ENCODE measurements at regions of chr6 and their contacts with region 1.

Region 1: DNA sequence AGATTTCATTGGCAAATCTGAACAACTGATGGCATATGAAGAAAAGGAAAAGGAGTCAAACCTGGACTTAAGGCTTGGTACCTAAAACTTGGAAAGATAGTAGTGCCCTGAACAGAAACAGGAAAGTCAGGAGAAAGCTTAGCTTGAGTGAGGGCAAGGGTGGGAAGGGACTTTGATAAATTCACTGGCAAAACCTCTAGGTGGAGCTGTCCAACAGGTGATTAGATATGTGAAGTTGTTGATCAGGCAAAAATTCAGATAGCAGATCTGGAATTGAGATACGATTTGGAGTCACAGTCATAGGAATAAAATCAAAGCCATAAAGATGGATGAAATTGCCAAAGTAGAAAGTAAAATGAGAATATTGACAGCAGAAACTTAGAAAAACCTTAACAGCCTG is 16.1 kb upstream of the ZNF292 start:
- DNase-seq: peak; percentile 53
- H3K4me3 Mint-ChIP-seq: no peak overlapping the region
- H3K27ac Mint-ChIP-seq: no peak overlapping the region
- H3K4me1 Mint-ChIP-seq: no peaks in the 10 kb centered on the region
- H3K27me3 Mint-ChIP-seq: peaks cover 42% of the 10 kb centered on the region
- CTCF ChIP-seq: peak; percentile 71

Region 2: GRCh38 chr6:87059943-87060342 is 79.3 kb before region 1 on chr6:
- CTCF ChIA-PET with region 1: no interaction called
- intact Hi-C with region 1: no loop called
- DNase-seq: no peak
- H3K4me3 Mint-ChIP-seq: no peak overlapping the region
- H3K27ac Mint-ChIP-seq: no peak overlapping the region
- H3K4me1 Mint-ChIP-seq: no peaks in the 10 kb centered on the region
- H3K27me3 Mint-ChIP-seq: peaks cover 39% of the 10 kb centered on the region
- CTCF ChIP-seq: no peak

Region 3: DNA sequence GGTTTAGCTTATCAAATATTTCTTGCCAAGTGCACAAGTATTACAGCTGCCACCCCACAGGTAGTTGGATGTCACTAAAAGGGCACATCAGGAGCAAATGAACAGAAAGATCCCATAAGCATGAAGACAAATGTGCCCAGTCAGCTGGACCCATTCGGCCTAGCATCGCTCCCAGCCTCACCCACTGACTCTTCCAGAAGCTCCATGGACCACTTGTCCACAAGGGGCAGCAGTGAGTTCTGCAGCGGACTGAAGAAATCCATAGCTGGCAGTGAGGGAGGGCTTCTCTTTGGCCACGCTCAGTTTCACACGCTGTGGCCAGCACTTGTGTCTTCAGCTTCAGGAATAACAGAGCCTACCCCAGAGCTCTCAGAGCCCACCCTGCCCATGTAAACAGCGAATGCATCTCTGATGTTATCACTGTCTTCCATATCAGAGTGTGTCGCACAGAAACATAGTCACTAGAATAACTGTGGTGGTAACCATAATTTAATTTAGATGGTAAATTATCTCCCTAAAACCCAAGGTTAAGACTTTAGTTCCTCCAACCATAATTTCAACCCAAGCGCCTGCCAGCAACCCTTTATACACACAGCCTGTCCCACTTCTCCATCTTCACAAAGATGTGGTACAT is 60.1 kb before region 1 on chr6:
- CTCF ChIA-PET with region 1: no interaction called
- intact Hi-C with region 1: loop called (anchors 10 kb)
- DNase-seq: peak; percentile 83
- H3K4me3 Mint-ChIP-seq: no peak overlapping the region
- H3K27ac Mint-ChIP-seq: no peak overlapping the region
- H3K4me1 Mint-ChIP-seq: peaks cover 11% of the 10 kb centered on the region
- H3K27me3 Mint-ChIP-seq: peaks cover 41% of the 10 kb centered on the region
- CTCF ChIP-seq: peak; percentile 87

Region 4: GRCh38 chr6:87089135-87089534 is 50.1 kb before region 1 on chr6:
- CTCF ChIA-PET with region 1: no interaction called
- intact Hi-C with region 1: no loop called
- DNase-seq: no peak
- H3K4me3 Mint-ChIP-seq: no peak overlapping the region
- H3K27ac Mint-ChIP-seq: no peak overlapping the region
- H3K4me1 Mint-ChIP-seq: no peaks in the 10 kb centered on the region
- H3K27me3 Mint-ChIP-seq: peaks cover 13% of the 10 kb centered on the region
- CTCF ChIP-seq: no peak

Region 5: GRCh38 chr6:87237804-87238203 is 98.6 kb after region 1 on chr6:
- CTCF ChIA-PET with region 1: interaction called, 5 read pairs
- intact Hi-C with region 1: loop called (anchors 2 kb)
- DNase-seq: no peak
- H3K4me3 Mint-ChIP-seq: no peak overlapping the region
- H3K27ac Mint-ChIP-seq: no peak overlapping the region
- H3K4me1 Mint-ChIP-seq: no peaks in the 10 kb centered on the region
- H3K27me3 Mint-ChIP-seq: no peaks in the 10 kb centered on the region
- CTCF ChIP-seq: peak; percentile 48

Region 6: DNA sequence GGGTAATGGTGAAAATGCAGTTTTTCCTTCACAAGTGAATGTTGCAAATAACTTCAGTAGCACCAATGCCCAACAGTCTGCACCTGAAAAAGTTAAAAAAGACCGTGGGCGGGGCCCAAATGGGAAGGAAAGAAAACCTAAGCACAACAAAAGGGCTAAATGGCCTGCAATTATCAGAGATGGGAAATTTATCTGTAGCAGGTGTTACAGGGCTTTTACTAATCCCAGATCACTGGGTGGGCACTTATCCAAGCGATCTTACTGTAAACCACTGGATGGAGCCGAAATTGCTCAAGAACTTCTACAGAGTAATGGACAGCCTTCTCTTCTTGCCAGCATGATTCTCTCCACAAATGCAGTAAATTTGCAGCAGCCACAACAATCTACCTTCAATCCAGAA is 118.3 kb after region 1 on chr6:
- CTCF ChIA-PET with region 1: no interaction called
- intact Hi-C with region 1: no loop called
- DNase-seq: no peak
- H3K4me3 Mint-ChIP-seq: no peak overlapping the region
- H3K27ac Mint-ChIP-seq: no peak overlapping the region
- H3K4me1 Mint-ChIP-seq: no peaks in the 10 kb centered on the region
- H3K27me3 Mint-ChIP-seq: no peaks in the 10 kb centered on the region
- CTCF ChIP-seq: no peak

Region 7: DNA sequence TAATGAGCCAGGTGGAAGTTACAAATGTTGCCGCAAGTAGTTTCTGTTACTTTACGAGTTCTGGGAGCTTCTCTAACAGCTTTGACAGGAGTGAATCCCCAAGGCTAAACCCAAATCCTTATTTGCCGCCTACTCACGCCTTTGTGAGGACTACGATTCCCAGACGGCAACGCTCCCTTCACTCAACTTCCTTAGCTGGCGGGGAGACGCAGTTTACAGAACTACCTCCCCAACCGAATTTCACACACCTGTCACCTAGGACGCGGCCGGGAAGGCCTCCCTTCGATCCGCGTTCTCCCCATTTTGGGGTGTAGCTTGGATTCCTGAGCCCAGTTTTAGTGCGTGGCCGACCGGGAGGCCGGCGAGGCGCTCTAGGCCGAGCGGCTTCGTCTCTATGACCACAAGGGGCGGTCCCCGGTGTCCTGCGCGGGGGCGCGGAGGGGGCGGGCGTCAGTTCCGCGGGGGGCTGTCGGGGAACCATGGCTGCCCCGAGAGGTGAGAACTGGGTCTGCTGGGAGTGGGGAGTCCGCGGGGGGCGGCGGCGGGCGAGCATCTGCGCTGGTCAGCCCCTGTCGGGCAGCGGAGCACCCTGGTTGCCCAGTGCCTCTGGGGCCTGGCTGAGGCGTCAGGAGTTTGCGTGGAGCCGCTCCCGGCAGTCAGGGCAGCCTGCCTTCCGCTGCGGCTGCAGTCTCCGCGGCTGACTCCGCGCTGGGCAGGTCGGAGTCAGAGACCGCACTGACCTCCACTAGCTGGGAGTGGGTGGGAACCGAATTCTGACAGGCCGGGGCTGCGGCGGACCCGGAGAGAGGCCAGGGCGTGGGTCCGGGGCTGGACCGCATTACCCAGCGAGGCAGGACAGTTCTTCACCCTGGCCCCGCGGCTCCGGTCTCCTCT is 333.5 kb after region 1 on chr6 and contains the start of gene SLC35A1:
- CTCF ChIA-PET with region 1: no interaction called
- intact Hi-C with region 1: loop called (anchors 5 kb)
- DNase-seq: peak; percentile 87
- H3K4me3 Mint-ChIP-seq: peak within 1 kb of the TSS; percentile 87
- H3K27ac Mint-ChIP-seq: peak within 1 kb of the TSS; percentile 78
- H3K4me1 Mint-ChIP-seq: peaks cover 10% of the 10 kb centered on the region
- H3K27me3 Mint-ChIP-seq: peaks cover 7% of the 10 kb centered on the region
- CTCF ChIP-seq: peak; percentile 19
- total RNA-seq, gene SLC35A1: 17.5 and 19.4 TPM in 2 replicates